CD8-positive, alpha-beta memory T cell (primary cell): ENCODE measurements at regions of chr1 and their contacts with region 1.

Region 1: DNA sequence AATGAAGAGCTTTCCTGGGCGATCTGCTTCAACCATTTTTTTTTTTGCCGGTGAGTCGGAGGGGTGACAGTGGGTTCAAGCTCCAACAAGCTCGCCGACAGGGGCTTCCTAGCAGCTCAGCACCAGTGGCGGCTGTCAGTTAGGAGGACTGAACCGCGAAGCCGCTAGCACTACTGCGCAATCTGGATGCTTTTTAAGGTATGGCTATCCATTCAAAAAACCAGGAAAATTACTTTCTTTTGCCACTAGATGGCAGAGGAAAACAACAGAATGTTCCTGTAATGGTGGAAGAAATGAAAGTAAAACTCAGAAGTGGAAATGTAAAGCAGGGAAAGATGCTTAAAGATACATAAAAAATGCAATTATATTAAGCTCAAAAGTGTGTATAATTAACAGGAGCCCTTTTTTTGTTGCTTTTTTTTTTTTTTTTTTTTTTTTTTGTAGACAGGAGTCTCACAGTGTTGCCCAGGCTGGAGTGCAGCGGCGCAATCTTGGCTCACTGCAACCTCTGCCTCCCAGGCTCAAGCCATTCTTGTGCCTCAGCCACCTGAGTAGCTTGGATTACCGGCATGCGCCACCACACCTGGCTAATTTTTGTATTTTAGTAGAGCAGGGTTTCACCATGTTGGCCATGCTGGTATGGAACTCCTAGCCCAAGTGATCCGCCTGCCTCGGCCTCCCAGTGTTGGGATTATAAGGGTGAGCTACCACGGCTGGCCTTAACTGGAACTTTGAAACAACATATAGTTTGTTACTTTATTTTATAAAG is 8.5 kb downstream of the KYAT3 start:
- DNase-seq: peak in 4 of 5 donors; percentile 46 to 67 (median 66)
- H3K4me3 ChIP-seq: no peak overlapping the region
- H3K4me3 Mint-ChIP-seq: peak overlapping the region; percentile 10 to 64 (median 60)
- H3K27ac ChIP-seq: no peak overlapping the region
- H3K27ac Mint-ChIP-seq: peak overlapping the region; percentile 47 to 87 (median 80)
- H3K4me1 ChIP-seq: peaks cover 19% of the 10 kb centered on the region
- H3K4me1 Mint-ChIP-seq: peaks cover 42 to 86% (median 84%) of the 10 kb centered on the region in 3 donors
- H3K27me3 ChIP-seq: no peaks in the 10 kb centered on the region
- H3K27me3 Mint-ChIP-seq: no peaks in the 10 kb centered on the region

Region 2: DNA sequence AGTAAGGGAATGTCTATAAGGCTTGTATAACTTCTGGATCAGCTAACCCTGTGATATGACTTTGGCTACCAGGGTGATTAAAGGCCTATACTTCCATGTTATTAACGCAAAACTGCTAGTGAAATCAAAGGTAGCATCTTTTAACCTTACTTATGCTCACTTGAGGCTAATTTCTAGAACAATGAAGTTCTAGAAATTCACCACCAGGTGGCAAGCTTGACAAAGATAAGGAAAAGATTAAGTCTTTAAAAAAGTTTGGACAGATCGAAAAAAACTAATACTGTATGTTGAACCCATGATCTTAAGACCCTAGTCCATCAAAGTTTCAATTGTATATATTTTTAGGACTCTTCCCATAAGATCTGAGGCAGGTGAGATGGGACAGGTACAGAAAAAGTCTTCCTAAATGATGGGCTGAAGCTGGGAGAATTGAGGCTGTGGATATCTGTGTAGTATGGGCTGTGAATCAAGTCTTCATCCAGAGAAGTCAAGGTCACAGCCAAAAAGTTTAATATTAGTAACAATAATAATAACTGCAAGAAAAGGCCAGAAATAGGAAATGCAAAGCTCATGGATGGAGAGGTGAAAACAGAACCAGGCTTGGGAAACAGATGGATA is 10.3 kb before region 1 on chr1:
- CTCF ChIA-PET with region 1: interaction called, 28 read pairs
- POLR2A ChIA-PET with region 1: interaction called, 4 read pairs
- DNase-seq: peak in 1 of 5 donors; percentile 27
- H3K4me3 ChIP-seq: no peak overlapping the region
- H3K4me3 Mint-ChIP-seq: no peak overlapping the region
- H3K27ac ChIP-seq: no peak overlapping the region
- H3K27ac Mint-ChIP-seq: peak overlapping the region in 4 of 8 donors; percentile 2 to 69 (median 30)
- H3K4me1 ChIP-seq: peaks cover 8% of the 10 kb centered on the region
- H3K4me1 Mint-ChIP-seq: peaks cover 21 to 42% (median 24%) of the 10 kb centered on the region in 3 donors
- H3K27me3 ChIP-seq: no peaks in the 10 kb centered on the region
- H3K27me3 Mint-ChIP-seq: peaks cover 0 to 1% of the 10 kb centered on the region in 2 donors

Region 3: GRCh38 chr1:88998716-88999115 is 14.7 kb after region 1 on chr1:
- CTCF ChIA-PET with region 1: interaction called, 25 read pairs
- POLR2A ChIA-PET with region 1: no interaction called
- DNase-seq: peak in 2 of 5 donors; percentile 63 to 64
- H3K4me3 ChIP-seq: no peak overlapping the region
- H3K4me3 Mint-ChIP-seq: peak overlapping the region in 1 of 7 donors; percentile 2
- H3K27ac ChIP-seq: no peak overlapping the region
- H3K27ac Mint-ChIP-seq: no peak overlapping the region
- H3K4me1 ChIP-seq: peaks cover 26% of the 10 kb centered on the region
- H3K4me1 Mint-ChIP-seq: peaks cover 24 to 34% (median 33%) of the 10 kb centered on the region in 3 donors
- H3K27me3 ChIP-seq: no peaks in the 10 kb centered on the region
- H3K27me3 Mint-ChIP-seq: no peaks in the 10 kb centered on the region

Region 4: DNA sequence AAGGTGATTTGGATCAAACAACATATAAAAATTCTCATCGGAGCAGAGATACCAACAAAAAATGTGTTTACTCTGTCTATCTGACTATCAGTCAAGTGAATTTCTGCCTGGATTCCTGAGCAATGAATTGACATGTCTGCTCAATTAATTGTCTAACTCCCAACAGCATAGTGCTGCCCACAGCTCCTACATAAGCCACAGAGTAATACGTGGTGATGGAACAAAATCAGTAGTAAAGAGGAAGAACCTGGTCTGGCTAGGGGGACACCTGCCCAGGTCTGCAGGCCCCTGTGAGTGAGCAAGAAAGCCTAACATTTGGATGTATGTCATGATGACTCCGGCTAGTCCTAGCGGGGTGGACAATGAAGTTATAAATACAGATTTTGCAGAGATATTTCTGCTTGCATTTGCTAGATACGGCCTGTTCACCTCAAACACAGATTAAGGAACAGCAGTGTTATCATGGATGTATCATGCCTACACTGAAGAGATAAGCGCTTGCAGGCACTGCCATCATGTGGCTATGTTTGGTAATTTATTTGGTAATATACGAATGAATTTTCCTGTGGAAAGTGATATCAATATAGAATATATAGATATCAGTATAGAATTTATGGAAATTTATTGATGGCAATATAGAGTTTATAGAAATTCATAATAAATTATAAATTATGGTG is 471.0 kb after region 1 on chr1:
- CTCF ChIA-PET with region 1: interaction called, 14 read pairs
- POLR2A ChIA-PET with region 1: no interaction called
- DNase-seq: peak; percentile 22 to 72 (median 58)
- H3K4me3 ChIP-seq: no peak overlapping the region
- H3K4me3 Mint-ChIP-seq: no peak overlapping the region
- H3K27ac ChIP-seq: no peak overlapping the region
- H3K27ac Mint-ChIP-seq: no peak overlapping the region
- H3K4me1 ChIP-seq: no peaks in the 10 kb centered on the region
- H3K4me1 Mint-ChIP-seq: peaks cover 6 to 15% (median 9%) of the 10 kb centered on the region in 3 donors
- H3K27me3 ChIP-seq: no peaks in the 10 kb centered on the region
- H3K27me3 Mint-ChIP-seq: peaks cover 4 to 9% of the 10 kb centered on the region in 2 donors